Endothelial cell of umbilical vein (primary cell): ENCODE measurements at regions of chr2 and their contacts with region 1.

Region 1: DNA sequence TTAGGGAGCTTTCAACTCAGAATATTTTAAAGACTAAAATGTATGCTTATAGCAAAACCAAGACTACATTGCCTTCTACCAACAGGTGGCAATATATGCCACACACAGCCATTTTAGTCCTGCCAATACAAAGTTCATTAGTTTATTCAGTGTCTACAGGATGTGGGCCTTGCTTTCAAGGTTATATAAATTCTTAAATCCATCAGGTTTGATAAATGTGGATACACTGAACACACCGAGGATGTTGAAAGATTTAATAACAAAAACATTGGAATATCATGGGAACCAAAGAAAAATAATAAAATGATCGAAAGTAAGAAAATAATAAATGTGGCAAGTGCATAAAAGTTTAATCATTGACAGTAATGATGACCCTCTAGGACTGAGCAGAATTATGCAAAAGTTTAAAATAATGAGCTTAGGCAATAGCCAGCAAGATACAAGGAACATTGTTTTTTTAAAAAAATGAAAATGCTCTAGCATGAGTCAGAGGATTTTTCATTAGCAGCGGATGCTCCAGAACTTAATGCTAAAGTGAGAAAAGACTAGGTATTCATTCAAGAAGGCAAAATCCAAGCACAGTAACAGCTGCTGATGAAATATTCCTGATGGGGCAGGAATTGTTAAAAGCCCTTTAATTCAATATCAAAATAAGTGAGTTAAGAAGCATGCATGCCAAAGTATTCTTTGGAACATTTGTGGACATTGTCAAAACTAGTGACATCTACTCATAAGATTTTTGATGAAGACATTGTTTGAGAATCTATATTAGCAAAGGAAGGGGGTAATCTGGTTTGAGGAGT is 14.2 kb downstream of the SCN9A start:
- DNase-seq: peak; percentile 69
- H3K4me3 ChIP-seq: no peak overlapping the region
- H3K27ac ChIP-seq: no peak overlapping the region
- H3K4me1 ChIP-seq: no peaks in the 10 kb centered on the region
- H3K27me3 ChIP-seq: no peaks in the 10 kb centered on the region
- CTCF ChIP-seq: peak; percentile 34 to 50
- POLR2A ChIP-seq: no peak

Region 2: GRCh38 chr2:166180951-166181812 is 180.4 kb before region 1 on chr2:
- CTCF ChIA-PET with region 1: interaction called, 19 read pairs
- POLR2A ChIA-PET with region 1: no interaction called
- dilution Hi-C with region 1: no loop called
- intact Hi-C with region 1: loop called (anchors 5 kb)
- DNase-seq: peak; percentile 65
- H3K4me3 ChIP-seq: no peak overlapping the region
- H3K27ac ChIP-seq: no peak overlapping the region
- H3K4me1 ChIP-seq: no peaks in the 10 kb centered on the region
- H3K27me3 ChIP-seq: peaks cover 0 to 1% of the 10 kb centered on the region in 2 experiments
- CTCF ChIP-seq: peak; percentile 42 to 57
- POLR2A ChIP-seq: no peak

Region 3: DNA sequence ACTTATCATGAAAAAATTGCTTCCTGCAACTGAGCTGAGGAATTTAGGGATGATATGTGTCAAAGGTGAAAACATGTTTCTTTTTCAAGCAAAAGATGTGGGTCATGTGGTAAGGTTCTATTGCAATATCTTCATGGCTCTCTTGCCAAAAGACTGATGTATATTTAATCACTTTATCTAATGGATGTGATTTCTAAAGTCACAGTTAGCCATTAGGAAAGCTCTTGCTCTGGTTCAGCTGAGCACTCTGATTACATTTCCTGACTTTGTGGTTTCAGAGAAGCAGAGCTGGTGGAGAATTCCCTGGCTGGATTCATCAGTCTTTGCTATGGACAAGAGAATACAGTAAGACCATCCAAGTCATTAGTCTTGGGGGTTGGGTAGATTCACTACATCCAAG is 10.2 kb before region 1 on chr2:
- CTCF ChIA-PET with region 1: interaction called, 12 read pairs
- POLR2A ChIA-PET with region 1: no interaction called
- dilution Hi-C with region 1: no loop called
- intact Hi-C with region 1: no loop called
- DNase-seq: no peak
- H3K4me3 ChIP-seq: no peak overlapping the region
- H3K27ac ChIP-seq: no peak overlapping the region
- H3K4me1 ChIP-seq: no peaks in the 10 kb centered on the region
- H3K27me3 ChIP-seq: no peaks in the 10 kb centered on the region
- CTCF ChIP-seq: no peak
- POLR2A ChIP-seq: no peak

Region 4: GRCh38 chr2:166375736-166376487 is 14.4 kb after region 1 on chr2 and contains the start of gene SCN9A:
- CTCF ChIA-PET with region 1: interaction called, 28 read pairs
- POLR2A ChIA-PET with region 1: no interaction called
- dilution Hi-C with region 1: no loop called
- intact Hi-C with region 1: no loop called
- DNase-seq: peak; percentile 59
- H3K4me3 ChIP-seq: peak within 1 kb of the TSS; percentile 48 to 67 (median 58)
- H3K27ac ChIP-seq: no peak within 1 kb of the TSS
- H3K4me1 ChIP-seq: peaks cover 10% of the 10 kb centered on the region
- H3K27me3 ChIP-seq: peaks cover 6 to 19% of the 10 kb centered on the region in 2 experiments
- CTCF ChIP-seq: no peak
- POLR2A ChIP-seq: no peak
- total RNA-seq, gene SCN9A: 1.6 and 1.8 TPM in 2 replicates

Region 5: DNA sequence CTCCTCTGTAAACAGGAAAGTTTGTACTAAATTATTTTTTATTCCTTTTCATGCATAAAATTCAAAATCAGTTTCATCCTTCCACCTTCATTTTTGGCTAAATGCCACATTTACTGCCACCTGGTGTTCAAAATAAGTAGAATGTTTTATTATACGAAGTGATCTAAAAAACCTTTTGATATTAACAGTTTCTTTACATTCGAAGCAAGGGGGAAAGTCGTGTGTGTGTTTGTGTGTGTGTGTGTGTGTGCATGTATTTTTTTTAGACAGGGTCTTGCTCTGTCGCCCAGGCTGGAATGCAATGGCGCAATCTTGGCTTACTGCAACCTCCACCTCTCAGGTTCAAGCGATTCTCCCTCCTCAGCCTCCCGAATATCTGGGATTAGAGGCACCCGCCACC is 23.2 kb after region 1 on chr2:
- CTCF ChIA-PET with region 1: interaction called, 15 read pairs
- POLR2A ChIA-PET with region 1: no interaction called
- dilution Hi-C with region 1: no loop called
- intact Hi-C with region 1: loop called (anchors 1 kb)
- DNase-seq: peak; percentile 58
- H3K4me3 ChIP-seq: no peak overlapping the region
- H3K27ac ChIP-seq: no peak overlapping the region
- H3K4me1 ChIP-seq: peaks cover 14% of the 10 kb centered on the region
- H3K27me3 ChIP-seq: peaks cover 6 to 10% of the 10 kb centered on the region in 2 experiments
- CTCF ChIP-seq: peak; percentile 32 to 37
- POLR2A ChIP-seq: no peak

Region 6: DNA sequence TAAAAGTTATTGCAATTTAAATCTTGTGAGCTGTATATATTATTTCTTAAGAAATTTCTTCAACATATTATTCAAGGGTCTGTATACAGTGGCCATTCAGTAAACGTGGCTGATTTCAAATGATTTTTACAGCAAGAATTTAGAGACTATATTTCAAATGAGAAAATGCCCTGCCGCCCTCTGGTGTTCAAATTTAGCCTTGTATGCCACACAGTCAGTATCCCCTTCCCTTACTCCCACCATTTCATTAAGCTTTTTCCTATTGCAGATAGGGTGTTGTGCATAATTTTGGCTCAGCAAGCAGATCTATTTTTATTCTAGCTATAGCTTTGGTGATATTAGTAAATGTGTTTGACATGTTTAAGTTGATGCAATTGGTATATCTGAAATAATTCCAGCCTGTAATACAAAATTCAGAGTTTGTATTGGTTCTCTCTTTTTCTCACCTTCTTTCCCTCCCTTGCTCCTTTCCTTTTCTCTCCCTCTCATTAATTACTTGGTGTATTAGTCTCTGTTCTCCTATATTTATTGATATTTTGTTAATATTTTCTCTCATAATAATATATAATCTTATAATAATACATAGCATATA is 155.3 kb after region 1 on chr2:
- CTCF ChIA-PET with region 1: interaction called, 31 read pairs
- POLR2A ChIA-PET with region 1: no interaction called
- dilution Hi-C with region 1: no loop called
- intact Hi-C with region 1: loop called (anchors 1 kb)
- DNase-seq: peak; percentile 61
- H3K4me3 ChIP-seq: no peak overlapping the region
- H3K27ac ChIP-seq: no peak overlapping the region
- H3K4me1 ChIP-seq: no peaks in the 10 kb centered on the region
- H3K27me3 ChIP-seq: no peaks in the 10 kb centered on the region
- CTCF ChIP-seq: peak; percentile 34 to 59
- POLR2A ChIP-seq: no peak